ENCODE measurements at regions of chr1 and their contacts with region 1.

Region 1: GRCh38 chr1:147541672-147542568 is 619 bp downstream of the BCL9 start:
- DNase-seq: peak; percentile 45
- H3K4me3 Mint-ChIP-seq: no peak overlapping the region
- H3K27ac Mint-ChIP-seq: no peak overlapping the region
- H3K4me1 Mint-ChIP-seq: peaks cover 41% of the 10 kb centered on the region
- H3K27me3 Mint-ChIP-seq: no peaks in the 10 kb centered on the region
- CTCF ChIP-seq: no peak

Region 2: DNA sequence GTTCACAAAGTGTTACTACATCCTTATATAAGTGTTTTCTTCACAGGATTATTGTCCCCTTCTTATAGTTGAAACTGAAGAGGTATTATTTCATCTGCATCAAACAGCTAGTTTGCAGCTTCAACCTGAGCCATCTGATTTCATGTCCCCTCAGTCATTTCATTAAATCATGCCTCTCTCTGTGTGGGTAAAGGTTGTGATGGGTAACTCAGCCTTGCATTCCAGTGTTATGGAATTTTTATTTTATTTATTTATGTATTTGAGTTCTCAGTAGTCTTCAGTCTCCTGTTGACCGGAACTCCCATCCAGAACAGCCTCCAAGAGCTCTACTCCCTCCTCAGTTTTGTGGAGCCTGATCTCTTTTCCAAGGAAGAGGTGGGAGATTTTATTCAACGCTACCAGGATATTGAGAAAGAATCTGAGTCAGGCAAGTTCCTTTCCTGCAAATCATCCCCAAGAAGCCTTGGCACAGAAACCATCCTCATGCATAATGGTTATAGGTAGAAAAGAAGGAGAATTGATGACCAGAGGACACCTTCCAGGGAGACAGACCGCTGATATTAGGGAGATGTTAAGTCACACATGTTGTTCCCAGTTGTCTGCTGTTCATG is 277.7 kb before region 1 on chr1:
- CTCF ChIA-PET with region 1: no interaction called
- intact Hi-C with region 1: no loop called
- DNase-seq: no peak
- H3K4me3 Mint-ChIP-seq: no peak overlapping the region
- H3K27ac Mint-ChIP-seq: no peak overlapping the region
- H3K4me1 Mint-ChIP-seq: no peaks in the 10 kb centered on the region
- H3K27me3 Mint-ChIP-seq: no peaks in the 10 kb centered on the region
- CTCF ChIP-seq: no peak

Region 3: GRCh38 chr1:147287133-147287865 is 254.6 kb before region 1 on chr1:
- CTCF ChIA-PET with region 1: no interaction called
- intact Hi-C with region 1: no loop called
- DNase-seq: no peak
- H3K4me3 Mint-ChIP-seq: no peak overlapping the region
- H3K27ac Mint-ChIP-seq: no peak overlapping the region
- H3K4me1 Mint-ChIP-seq: no peaks in the 10 kb centered on the region
- H3K27me3 Mint-ChIP-seq: no peaks in the 10 kb centered on the region
- CTCF ChIP-seq: no peak

Region 4: GRCh38 chr1:147351140-147351835 is 190.6 kb before region 1 on chr1:
- CTCF ChIA-PET with region 1: no interaction called
- intact Hi-C with region 1: no loop called
- DNase-seq: no peak
- H3K4me3 Mint-ChIP-seq: no peak overlapping the region
- H3K27ac Mint-ChIP-seq: no peak overlapping the region
- H3K4me1 Mint-ChIP-seq: no peaks in the 10 kb centered on the region
- H3K27me3 Mint-ChIP-seq: no peaks in the 10 kb centered on the region
- CTCF ChIP-seq: no peak

Region 5: GRCh38 chr1:147494998-147495580 is 46.8 kb before region 1 on chr1:
- CTCF ChIA-PET with region 1: no interaction called
- intact Hi-C with region 1: no loop called
- DNase-seq: peak; percentile 78
- H3K4me3 Mint-ChIP-seq: no peak overlapping the region
- H3K27ac Mint-ChIP-seq: no peak overlapping the region
- H3K4me1 Mint-ChIP-seq: no peaks in the 10 kb centered on the region
- H3K27me3 Mint-ChIP-seq: no peaks in the 10 kb centered on the region
- CTCF ChIP-seq: peak; percentile 84

Region 6: DNA sequence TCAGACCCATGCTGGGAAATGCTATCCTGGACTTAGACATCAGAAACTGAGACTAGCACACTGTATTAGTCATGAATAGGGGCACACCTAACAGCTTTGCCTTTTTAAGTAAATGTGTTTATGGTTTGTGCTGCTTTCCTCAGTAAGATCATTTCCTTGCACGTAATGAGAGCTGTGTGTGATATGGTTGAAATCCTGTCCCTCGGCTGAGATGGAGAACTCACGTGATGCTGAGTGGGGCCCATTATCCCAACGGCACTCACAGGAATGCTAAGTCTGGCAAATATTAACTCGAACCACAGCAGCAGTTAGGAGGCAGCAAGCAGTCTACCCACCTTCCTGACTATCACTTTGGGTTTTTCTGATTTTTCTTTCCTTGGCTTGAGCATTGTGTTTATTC is 37.6 kb after region 1 on chr1:
- CTCF ChIA-PET with region 1: interaction called, 4 read pairs
- intact Hi-C with region 1: loop called (anchors 5 kb)
- DNase-seq: peak; percentile 72
- H3K4me3 Mint-ChIP-seq: peak overlapping the region; percentile 52
- H3K27ac Mint-ChIP-seq: peak overlapping the region; percentile 55
- H3K4me1 Mint-ChIP-seq: peaks cover 16% of the 10 kb centered on the region
- H3K27me3 Mint-ChIP-seq: no peaks in the 10 kb centered on the region
- CTCF ChIP-seq: no peak

Region 7: DNA sequence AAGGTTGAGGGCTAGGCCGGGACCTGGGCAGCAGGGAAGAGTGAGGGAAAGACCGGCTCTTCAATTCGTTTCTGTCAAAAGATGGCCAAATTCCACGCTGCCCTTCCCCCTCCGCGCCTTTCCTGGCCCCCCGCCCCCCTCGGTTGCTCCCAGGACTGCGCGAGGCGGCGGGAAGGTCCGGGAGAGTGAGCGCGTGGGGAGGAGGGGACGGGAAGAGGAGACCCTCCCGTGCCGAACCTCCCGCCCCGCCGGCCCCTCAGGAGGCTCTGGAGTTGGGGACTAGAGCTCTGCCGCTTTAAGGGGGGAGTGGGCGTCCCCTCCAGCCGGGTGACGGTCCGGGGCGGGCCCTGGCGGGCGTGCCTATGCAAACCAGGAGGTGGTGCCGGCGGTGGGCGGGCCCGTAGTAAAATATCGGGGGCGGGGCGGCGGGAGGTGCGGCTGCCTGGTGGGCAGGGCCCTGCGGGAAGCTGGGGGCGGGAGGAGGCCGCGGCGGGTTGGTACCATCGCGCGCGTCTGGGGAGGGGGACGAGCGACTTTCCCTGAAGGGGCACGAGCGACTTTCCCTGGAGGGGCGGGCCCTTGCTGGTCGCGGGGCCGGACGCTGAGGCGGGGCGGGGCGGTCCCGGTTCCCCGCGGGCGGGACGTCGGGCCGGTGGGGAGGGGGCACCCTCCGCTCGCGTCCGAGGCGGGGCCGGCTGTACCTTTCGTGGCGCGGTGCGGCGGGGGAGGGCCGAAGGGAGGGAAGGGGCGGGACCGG is 57.6 kb after region 1 on chr1:
- CTCF ChIA-PET with region 1: interaction called, 9 read pairs
- intact Hi-C with region 1: loop called (anchors 1 kb)
- DNase-seq: peak; percentile 98
- H3K4me3 Mint-ChIP-seq: peak overlapping the region; percentile 92
- H3K27ac Mint-ChIP-seq: peak overlapping the region; percentile 50
- H3K4me1 Mint-ChIP-seq: peaks cover 24% of the 10 kb centered on the region
- H3K27me3 Mint-ChIP-seq: no peaks in the 10 kb centered on the region
- CTCF ChIP-seq: no peak